Panc1 (cell line): ENCODE measurements at regions of chr17 and their contacts with region 1.

Region 1: GRCh38 chr17:5584383-5585286 is at the start of gene NLRP1:
- DNase-seq: no peak
- ATAC-seq: peak; percentile 52; the same call in 1 of the 2 replicates
- H3K4me3 ChIP-seq: no peak within 1 kb of the TSS; a peak in 1 of 4 replicates
- H3K27ac ChIP-seq: no peak within 1 kb of the TSS
- H3K4me1 ChIP-seq: no peaks in the 10 kb centered on the region
- H3K27me3 ChIP-seq: no peaks in the 10 kb centered on the region
- CTCF ChIP-seq: no peak
- total RNA-seq, gene NLRP1: 0.57 TPM

Region 2: GRCh38 chr17:5706577-5707216 is 122.1 kb after region 1 on chr17:
- CTCF ChIA-PET with region 1: no interaction called
- POLR2A ChIA-PET with region 1: no interaction called
- in situ Hi-C with region 1: no loop called
- intact Hi-C with region 1: loop called (anchors 5 kb)
- DNase-seq: peak; percentile 45
- ATAC-seq: no peak
- H3K4me3 ChIP-seq: no peak overlapping the region
- H3K27ac ChIP-seq: no peak overlapping the region
- H3K4me1 ChIP-seq: no peaks in the 10 kb centered on the region
- H3K27me3 ChIP-seq: no peaks in the 10 kb centered on the region; the same call in 1 of the 2 replicates
- CTCF ChIP-seq: peak; percentile 87

Region 3: DNA sequence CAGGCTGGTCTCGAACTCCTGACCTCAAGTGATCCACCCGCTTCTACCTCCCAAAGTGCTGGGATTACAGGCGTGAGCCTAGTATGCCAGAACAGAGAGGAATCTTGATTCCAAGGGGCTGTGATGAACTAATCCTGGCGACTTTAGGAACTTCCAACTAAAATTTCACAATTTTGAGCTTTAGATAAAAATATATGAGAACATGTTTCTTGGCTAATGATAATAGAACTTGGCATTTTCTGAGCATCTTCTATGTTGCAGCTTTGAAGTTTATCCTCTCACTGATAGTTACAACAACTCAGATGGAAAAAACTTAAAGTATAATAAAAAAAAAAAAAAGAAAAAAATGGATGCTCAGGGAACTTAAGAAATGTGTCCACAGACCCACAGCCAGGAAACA is 415.8 kb after region 1 on chr17:
- CTCF ChIA-PET with region 1: no interaction called
- POLR2A ChIA-PET with region 1: no interaction called
- in situ Hi-C with region 1: no loop called
- intact Hi-C with region 1: no loop called
- DNase-seq: no peak
- ATAC-seq: no peak
- H3K4me3 ChIP-seq: no peak overlapping the region
- H3K27ac ChIP-seq: no peak overlapping the region
- H3K4me1 ChIP-seq: no peaks in the 10 kb centered on the region; the same call in 1 of the 2 replicates
- H3K27me3 ChIP-seq: no peaks in the 10 kb centered on the region
- CTCF ChIP-seq: no peak

Region 4: DNA sequence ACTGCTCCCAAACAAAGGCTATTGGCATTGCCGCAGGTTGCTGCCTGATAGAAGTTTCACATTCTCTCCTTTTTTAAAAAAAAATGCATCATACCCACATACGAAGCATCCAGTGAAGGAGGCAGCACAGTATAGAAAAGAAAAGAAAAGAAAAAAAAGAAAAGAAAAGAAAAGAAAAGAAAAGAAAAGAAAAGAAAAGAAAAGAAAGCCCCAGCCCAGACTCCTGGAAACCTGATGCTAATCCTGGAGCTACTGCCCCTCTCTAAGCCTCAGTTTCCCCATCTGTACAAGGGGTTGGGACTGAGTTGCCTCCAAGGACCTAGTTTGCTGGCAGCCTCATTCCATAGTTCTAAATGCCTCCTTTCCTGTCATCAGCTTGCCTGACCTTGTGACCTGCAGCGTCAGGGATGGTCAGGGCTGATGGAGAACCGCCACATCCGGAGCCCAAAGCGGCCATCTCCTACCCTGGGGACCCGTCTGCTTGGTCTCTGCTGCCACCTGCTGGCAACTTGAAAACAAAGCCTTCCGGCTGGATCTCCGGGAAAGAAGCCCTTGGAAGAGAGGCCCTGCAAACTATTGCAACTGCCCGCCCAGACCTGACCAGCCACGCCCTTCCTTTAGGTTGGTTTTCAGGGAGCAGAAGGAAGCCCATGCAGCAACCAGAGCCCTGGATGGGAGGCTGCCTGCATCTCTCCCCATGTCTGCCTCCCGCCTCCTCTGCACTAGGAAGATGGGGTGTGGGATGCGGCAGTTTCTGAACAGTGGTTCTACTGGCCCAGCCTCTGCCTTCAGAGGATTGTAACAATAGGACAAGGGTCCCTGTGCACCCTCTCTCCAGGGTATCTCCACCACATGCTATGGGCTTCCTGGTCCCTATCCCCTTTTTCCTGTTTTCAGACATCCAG is 837.3 kb after region 1 on chr17:
- CTCF ChIA-PET with region 1: no interaction called
- POLR2A ChIA-PET with region 1: no interaction called
- in situ Hi-C with region 1: no loop called
- intact Hi-C with region 1: loop called (anchors 2 kb)
- DNase-seq: peak; percentile 55
- ATAC-seq: peak; percentile 94
- H3K4me3 ChIP-seq: no peak overlapping the region
- H3K27ac ChIP-seq: no peak overlapping the region
- H3K4me1 ChIP-seq: no peaks in the 10 kb centered on the region
- H3K27me3 ChIP-seq: no peaks in the 10 kb centered on the region
- CTCF ChIP-seq: peak; percentile 88